ENCODE measurements at regions of chr15 and their contacts with region 1.

Region 1: DNA sequence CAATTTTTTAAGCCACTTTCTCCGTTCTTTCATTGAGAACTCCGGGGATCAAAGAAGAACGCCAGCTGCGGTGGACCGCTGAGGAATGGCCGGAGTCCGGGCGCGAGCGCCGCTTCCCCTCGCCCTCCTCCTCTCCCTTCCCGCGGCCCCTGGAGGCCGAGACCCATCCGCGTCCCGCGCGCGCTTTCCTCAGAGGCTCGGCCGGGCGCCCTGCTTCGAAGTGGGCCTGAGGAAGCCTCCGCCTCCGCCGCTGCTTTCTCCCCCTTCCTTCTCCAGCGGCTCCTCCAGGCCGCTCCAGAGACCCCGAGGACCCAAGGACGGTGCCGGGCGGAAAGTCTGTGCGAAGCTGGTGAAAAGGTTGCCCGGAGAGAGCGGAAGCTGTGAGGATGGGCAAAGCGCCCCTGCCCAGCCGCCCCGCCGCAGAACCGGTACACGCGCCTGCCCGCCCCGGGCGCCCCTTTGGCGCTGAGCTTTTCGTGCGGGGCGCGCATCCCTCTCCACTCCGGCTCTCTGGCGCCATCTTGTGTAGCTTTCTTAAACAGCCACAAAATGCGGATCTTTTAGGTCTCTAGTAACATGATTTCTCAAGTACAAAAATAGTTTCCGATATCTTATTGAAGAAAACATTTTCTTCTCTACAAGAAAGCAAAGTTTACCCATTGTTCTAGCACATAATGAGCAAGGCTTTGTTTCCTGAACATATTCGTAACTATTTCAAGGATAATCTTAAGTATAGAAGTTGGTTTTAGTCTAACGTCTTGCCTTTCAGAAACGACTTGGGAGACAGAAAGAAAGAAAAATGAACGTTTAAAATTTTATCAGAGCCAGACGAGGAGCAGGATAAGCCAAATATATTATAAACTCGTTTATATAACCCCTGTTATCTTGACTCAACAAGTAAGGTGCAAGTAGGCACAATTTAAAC is 59.2 kb upstream of the FAM174B start:
- DNase-seq: peak; percentile 89
- H3K4me3 ChIP-seq: peak overlapping the region; percentile 57 to 93
- H3K27ac ChIP-seq: peak overlapping the region; percentile 46 to 67
- H3K4me1 ChIP-seq: peaks cover 0 to 3% of the 10 kb centered on the region in 2 experiments; a peak in 2 of 4 replicates
- H3K27me3 ChIP-seq: 0 out of 2 replicates have a peak, but pooled peaks cover 5% of the 10 kb centered on the region
- CTCF ChIP-seq: peak; percentile 90
- EP300 ChIP-seq: no peak
- RAD21 ChIP-seq: peak; percentile 94

Region 2: DNA sequence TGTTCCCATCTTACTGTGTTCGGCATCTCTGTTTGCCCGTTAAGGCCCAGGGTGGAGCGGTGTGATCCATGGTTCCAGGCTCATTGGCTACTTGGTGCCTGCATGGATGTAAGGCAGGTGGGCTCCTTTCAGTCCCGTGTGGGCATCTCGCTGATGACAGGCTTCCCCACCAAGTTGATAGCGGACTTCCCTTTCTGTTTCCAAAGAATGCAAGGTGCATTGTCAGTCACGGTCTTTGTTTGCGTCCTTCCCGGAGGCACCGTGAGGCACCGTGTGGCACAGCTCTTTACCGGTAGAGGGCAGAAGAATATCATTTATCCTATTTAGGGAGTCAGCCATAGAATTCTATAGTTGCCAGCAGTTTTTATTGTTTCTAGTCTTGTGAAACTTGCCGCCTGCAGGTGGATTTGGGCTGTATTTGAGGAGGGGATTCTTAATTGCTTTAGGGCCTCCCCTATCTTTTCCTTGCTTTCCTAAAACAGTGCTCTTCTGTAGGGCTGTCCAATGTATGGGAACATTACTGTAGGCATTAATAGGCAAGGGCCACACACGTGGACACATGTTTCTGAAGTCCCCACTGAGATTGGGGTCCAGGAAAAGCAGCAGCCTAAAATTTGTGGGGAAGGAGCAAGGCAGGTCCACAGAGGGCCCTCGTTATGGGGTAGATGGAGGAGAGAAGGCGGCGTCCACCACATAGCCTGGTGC is 617.1 kb before region 1 on chr15:
- CTCF ChIA-PET with region 1: interaction called, 67 read pairs
- POLR2A ChIA-PET with region 1: interaction called, 3 read pairs
- DNase-seq: peak; percentile 69
- H3K4me3 ChIP-seq: no peak overlapping the region; a peak in 1 of 4 replicates
- H3K27ac ChIP-seq: no peak overlapping the region
- H3K4me1 ChIP-seq: peaks cover 0 to 9% of the 10 kb centered on the region in 2 experiments; a peak in 1 of 4 replicates
- H3K27me3 ChIP-seq: no peaks in the 10 kb centered on the region
- CTCF ChIP-seq: peak; percentile 75
- EP300 ChIP-seq: no peak
- RAD21 ChIP-seq: peak; percentile 94

Region 3: DNA sequence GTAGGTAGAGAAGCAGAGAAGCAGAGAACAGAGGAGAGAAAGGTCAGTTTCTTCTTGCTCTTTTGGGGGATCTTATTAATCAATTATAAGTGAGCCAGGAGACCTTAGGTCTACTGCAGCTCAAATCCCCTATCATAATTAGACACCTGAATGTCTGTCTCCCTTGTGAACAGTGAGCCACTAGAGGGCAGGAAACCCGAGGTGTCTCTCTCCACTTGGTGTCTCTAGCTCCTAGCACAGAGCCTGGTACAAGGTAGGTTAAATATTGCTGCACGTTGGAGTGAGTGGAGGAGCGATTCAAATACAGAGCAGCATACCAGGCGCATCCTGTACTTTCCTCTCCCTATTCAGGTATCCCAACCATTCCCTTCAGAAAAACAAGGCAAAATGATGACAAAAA is 323.1 kb before region 1 on chr15:
- CTCF ChIA-PET with region 1: interaction called, 15 read pairs
- POLR2A ChIA-PET with region 1: no interaction called
- DNase-seq: no peak
- H3K4me3 ChIP-seq: no peak overlapping the region
- H3K27ac ChIP-seq: no peak overlapping the region
- H3K4me1 ChIP-seq: no peaks in the 10 kb centered on the region; a peak in 1 of 4 replicates
- H3K27me3 ChIP-seq: no peaks in the 10 kb centered on the region
- CTCF ChIP-seq: no peak
- EP300 ChIP-seq: no peak
- RAD21 ChIP-seq: peak; percentile 54

Region 4: GRCh38 chr15:92611993-92612745 is 102.6 kb before region 1 on chr15:
- CTCF ChIA-PET with region 1: interaction called, 15 read pairs
- POLR2A ChIA-PET with region 1: no interaction called
- DNase-seq: peak; percentile 61
- H3K4me3 ChIP-seq: no peak overlapping the region
- H3K27ac ChIP-seq: peak overlapping the region in 1 of 2 experiments; percentile 68; a peak in 2 of 4 replicates
- H3K4me1 ChIP-seq: peaks cover 0 to 12% of the 10 kb centered on the region in 2 experiments; a peak in 1 of 4 replicates
- H3K27me3 ChIP-seq: no peaks in the 10 kb centered on the region
- CTCF ChIP-seq: no peak
- EP300 ChIP-seq: no peak
- RAD21 ChIP-seq: peak; percentile 57

Region 5: GRCh38 chr15:92653836-92654539 is 60.8 kb before region 1 on chr15:
- CTCF ChIA-PET with region 1: interaction called, 11 read pairs
- POLR2A ChIA-PET with region 1: no interaction called
- DNase-seq: peak; percentile 60
- H3K4me3 ChIP-seq: no peak overlapping the region
- H3K27ac ChIP-seq: no peak overlapping the region
- H3K4me1 ChIP-seq: peaks cover 0 to 3% of the 10 kb centered on the region in 2 experiments; a peak in 1 of 4 replicates
- H3K27me3 ChIP-seq: no peaks in the 10 kb centered on the region
- CTCF ChIP-seq: no peak
- EP300 ChIP-seq: no peak
- RAD21 ChIP-seq: no peak; the same call in 1 of the 2 replicates

Region 6: GRCh38 chr15:92687195-92687602 is 27.5 kb before region 1 on chr15:
- CTCF ChIA-PET with region 1: interaction called, 11 read pairs
- POLR2A ChIA-PET with region 1: no interaction called
- DNase-seq: no peak
- H3K4me3 ChIP-seq: no peak overlapping the region
- H3K27ac ChIP-seq: no peak overlapping the region
- H3K4me1 ChIP-seq: peaks cover 0 to 2% of the 10 kb centered on the region in 2 experiments; a peak in 1 of 4 replicates
- H3K27me3 ChIP-seq: no peaks in the 10 kb centered on the region
- CTCF ChIP-seq: no peak
- EP300 ChIP-seq: no peak
- RAD21 ChIP-seq: no peak

Region 7: GRCh38 chr15:93121107-93121506 is 406.4 kb after region 1 on chr15:
- CTCF ChIA-PET with region 1: no interaction called
- POLR2A ChIA-PET with region 1: no interaction called
- DNase-seq: no peak
- H3K4me3 ChIP-seq: no peak overlapping the region
- H3K27ac ChIP-seq: no peak overlapping the region
- H3K4me1 ChIP-seq: no peaks in the 10 kb centered on the region
- H3K27me3 ChIP-seq: no peaks in the 10 kb centered on the region
- CTCF ChIP-seq: no peak
- EP300 ChIP-seq: no peak
- RAD21 ChIP-seq: no peak

Measured in SK-N-SH (cell line).